ENCODE measurements at regions of chrX and their contacts with region 1.

Region 1: DNA sequence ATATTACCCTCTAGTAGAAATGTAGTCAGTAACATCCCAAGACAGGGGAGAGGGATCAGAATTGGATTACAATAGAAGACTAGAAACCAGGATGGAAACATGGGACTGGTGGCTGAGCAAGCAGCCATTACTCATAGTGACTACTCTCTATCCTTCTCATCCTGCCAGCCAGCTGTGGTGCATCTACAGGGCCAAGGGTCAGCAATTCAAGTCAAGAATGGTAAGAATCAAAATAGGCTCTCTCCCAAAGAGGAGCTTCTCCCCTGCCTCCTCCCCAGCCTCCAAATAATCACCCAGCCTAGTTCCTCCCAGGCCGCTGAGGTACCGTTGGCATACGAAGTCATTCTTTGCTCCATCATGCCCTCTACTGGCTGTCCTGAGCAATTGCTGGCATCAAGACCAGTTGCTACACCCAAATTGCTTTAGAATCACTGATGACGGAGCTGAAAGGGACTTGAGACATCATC is 19.4 kb downstream of the AWAT2 start:
- DNase-seq: no peak

Region 2: GRCh38 chrX:69429339-69430015 is 600.9 kb before region 1 on chrX:
- intact Hi-C with region 1: loop called (anchors 5 kb)
- DNase-seq: no peak

Region 3: GRCh38 chrX:69493193-69493592 is 537.1 kb before region 1 on chrX:
- intact Hi-C with region 1: loop called (anchors 2 kb)
- DNase-seq: no peak

Region 4: DNA sequence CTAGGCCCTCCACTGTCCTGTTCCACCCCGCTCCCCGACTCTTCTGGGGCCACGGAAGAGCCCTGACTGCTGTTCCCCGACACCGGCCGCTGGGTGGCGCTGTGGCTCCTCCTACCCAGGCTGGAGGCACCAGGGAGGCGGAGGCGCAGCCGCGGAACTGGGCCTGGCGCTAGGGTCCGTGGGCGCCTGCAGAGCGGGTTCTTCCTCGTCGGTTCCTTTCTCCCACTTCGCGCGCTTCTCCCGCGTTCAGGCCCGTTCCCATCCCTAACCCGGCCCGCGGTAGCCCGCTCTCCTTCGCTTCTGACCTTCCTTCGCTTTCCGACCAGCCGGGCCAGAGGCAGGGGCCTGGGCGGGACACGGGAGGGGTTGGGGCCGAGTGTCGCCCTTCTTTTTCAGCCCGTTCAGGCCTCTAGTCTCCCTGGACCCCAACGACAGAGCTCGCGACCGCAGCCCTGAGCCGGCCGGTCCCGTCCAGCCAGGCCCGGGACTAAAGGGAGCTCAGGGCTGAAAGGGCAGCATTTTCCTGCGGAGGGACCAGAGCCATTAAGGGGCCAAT is 491.9 kb before region 1 on chrX:
- intact Hi-C with region 1: loop called (anchors 2 kb)
- DNase-seq: no peak

Region 5: DNA sequence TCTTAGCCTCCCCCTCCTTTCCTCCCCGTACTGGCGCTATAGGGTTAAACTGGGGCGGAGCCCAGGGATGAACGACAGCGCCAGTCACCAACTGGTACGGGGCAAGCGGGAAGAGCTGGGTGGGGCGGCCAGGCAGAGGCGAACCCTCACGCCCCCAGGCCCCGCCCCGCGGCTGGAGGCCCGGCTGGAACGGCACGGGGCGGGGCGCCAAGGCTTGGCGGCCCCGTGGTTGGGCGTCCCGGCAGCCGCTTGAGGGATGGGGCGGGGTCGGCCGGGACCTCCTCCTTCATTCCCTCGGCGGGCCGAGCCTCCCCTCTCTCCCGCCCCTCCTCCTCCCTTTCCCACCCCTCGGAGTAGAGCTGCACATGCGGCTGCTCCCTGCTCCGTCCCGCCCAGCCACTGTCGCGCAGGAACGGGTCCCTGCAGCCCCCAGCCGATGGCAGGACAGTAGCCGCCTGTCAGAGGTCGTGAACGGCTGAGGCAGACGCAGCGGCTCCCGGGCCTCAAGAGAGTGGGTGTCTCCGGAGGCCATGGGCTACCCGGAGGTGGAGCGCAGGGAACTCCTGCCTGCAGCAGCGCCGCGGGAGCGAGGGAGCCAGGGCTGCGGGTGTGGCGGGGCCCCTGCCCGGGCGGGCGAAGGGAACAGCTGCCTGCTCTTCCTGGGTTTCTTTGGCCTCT is 414.4 kb before region 1 on chrX and contains the start of gene EDA:
- intact Hi-C with region 1: loop called (anchors 10 kb)
- DNase-seq: peak; percentile 85
- total RNA-seq, gene EDA: 5.9 TPM

Region 6: GRCh38 chrX:70096052-70096451 is 65.7 kb after region 1 on chrX:
- intact Hi-C with region 1: loop called (anchors 2 kb)
- DNase-seq: no peak

Measured in cardiac septum (tissue), 1 donor.